Endothelial cell of umbilical vein (primary cell): ENCODE measurements at regions of chr17 and their contacts with region 1.

Region 1: DNA sequence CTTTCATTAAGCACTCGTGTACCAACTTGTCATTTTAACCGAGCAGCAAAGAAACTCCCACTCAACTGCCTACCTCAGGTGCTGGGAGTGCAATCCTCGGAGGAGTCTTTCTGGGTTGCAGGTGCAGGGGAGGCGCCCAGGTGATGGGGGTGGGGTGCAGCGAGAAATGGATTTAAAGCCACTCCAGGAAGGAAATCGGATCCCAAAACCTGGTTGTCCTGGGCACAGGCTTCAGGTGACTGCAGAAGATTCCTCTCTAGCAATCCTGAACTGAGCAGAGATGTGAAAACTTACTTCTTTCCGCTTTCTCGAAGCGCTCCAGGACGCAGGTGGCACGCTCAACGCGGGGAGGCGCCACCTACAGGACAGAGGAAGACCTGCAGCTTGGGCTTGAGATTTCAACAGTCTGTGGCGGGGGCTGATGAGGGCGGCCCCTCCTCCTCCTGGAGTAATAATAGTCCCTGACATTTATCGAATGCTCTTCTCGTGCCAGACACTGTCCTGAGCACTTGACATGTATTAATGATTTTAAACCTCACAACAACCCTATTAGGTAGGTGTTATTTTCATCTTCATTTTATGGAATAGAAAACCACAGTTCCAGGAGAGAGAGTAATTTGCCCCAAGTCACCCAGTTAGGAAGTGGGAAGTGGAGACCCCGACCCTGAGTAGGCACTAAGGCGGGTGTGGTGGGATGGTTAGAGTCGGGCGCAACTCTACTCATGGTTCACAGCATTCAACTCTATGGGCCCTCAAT is 27.2 kb upstream of the SKAP1 start:
- DNase-seq: peak; percentile 70
- H3K4me3 ChIP-seq: no peak overlapping the region
- H3K27ac ChIP-seq: no peak overlapping the region
- H3K4me1 ChIP-seq: no peaks in the 10 kb centered on the region
- H3K27me3 ChIP-seq: peaks cover 40 to 54% of the 10 kb centered on the region in 2 experiments
- CTCF ChIP-seq: peak; percentile 96 to 98
- POLR2A ChIP-seq: no peak

Region 2: GRCh38 chr17:48441231-48441711 is 16.0 kb before region 1 on chr17:
- CTCF ChIA-PET with region 1: interaction called, 10 read pairs
- POLR2A ChIA-PET with region 1: no interaction called
- dilution Hi-C with region 1: no loop called
- intact Hi-C with region 1: no loop called
- DNase-seq: no peak
- H3K4me3 ChIP-seq: no peak overlapping the region
- H3K27ac ChIP-seq: no peak overlapping the region
- H3K4me1 ChIP-seq: peaks cover 5% of the 10 kb centered on the region
- H3K27me3 ChIP-seq: peaks cover 24 to 28% of the 10 kb centered on the region in 2 experiments
- CTCF ChIP-seq: no peak
- POLR2A ChIP-seq: no peak

Region 3: GRCh38 chr17:48472411-48473281 is 15.4 kb after region 1 on chr17:
- CTCF ChIA-PET with region 1: interaction called, 10 read pairs
- POLR2A ChIA-PET with region 1: no interaction called
- dilution Hi-C with region 1: no loop called
- intact Hi-C with region 1: no loop called
- DNase-seq: no peak
- H3K4me3 ChIP-seq: no peak overlapping the region
- H3K27ac ChIP-seq: no peak overlapping the region
- H3K4me1 ChIP-seq: no peaks in the 10 kb centered on the region
- H3K27me3 ChIP-seq: peaks cover 14 to 35% of the 10 kb centered on the region in 2 experiments
- CTCF ChIP-seq: no peak
- POLR2A ChIP-seq: no peak

Region 4: GRCh38 chr17:48767263-48767774 is 310.1 kb after region 1 on chr17:
- CTCF ChIA-PET with region 1: no interaction called
- POLR2A ChIA-PET with region 1: no interaction called
- dilution Hi-C with region 1: no loop called
- intact Hi-C with region 1: no loop called
- DNase-seq: no peak
- H3K4me3 ChIP-seq: no peak overlapping the region
- H3K27ac ChIP-seq: no peak overlapping the region
- H3K4me1 ChIP-seq: no peaks in the 10 kb centered on the region
- H3K27me3 ChIP-seq: peaks cover 20 to 33% of the 10 kb centered on the region in 2 experiments
- CTCF ChIP-seq: no peak
- POLR2A ChIP-seq: no peak